Cardiac septum (tissue), 1 donor: ENCODE measurements at regions of chr1 and their contacts with region 1.

Region 1: GRCh38 chr1:114418247-114418646 is 92.8 kb downstream of the TRIM33 start:
- DNase-seq: no peak

Region 2: GRCh38 chr1:114192329-114192728 is 225.9 kb before region 1 on chr1:
- intact Hi-C with region 1: no loop called
- DNase-seq: no peak

Region 3: DNA sequence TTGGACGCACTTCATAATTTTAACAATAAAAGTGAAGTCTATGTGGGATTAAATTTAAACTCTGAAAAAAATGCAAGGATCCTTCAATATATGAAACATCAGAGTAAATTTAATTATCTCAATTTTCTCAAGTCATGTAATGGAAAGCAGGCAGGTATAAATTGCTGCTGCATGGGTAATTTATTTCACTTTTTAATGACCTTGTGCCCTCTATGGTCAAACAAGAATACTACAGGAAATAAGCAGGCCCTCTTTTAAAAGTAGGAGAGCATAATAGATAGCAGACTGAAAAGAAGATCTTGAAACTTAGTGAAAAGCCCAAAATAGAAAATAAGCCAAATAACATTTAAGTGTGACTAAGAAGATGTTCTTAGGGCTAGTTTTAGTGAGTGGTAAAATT is 140.3 kb after region 1 on chr1:
- intact Hi-C with region 1: loop called (anchors 10 kb)
- DNase-seq: no peak